H1 (cell line): ENCODE measurements at regions of chr7 and their contacts with region 1.

Region 1: DNA sequence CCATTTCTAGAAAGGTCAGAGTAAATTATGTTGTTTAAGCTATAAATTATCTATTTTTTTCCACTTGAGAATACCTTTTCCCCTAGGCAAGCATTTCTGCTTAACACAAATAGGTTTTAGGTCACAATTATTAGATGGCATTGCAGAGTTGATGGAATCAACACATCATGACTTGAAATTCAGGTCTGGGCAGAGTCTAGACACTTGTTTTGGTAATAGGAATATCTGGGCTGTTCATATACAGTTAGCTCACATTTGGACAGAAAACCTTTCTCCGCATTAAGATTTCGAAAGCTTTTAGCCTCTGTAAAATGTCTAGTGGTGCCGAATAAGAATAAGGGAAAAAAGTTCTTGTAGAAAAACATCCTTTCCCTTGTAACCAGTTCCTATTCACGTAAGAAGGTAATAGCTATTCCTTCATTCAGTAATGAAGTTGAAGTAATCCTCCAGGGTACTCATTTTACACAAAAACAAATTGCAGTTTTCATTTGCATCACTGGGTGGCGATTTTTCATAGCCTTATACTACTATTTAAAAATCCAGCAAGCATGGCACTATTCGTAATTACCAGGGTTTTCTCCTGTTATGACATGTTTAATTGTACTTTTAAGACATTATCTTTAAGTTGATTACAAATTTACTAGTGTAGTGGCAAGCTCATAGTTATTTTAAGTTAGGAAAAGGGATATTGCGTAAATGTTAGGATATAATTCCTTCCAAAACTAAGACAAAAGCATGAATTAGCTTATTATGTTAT is 37.0 kb downstream of the RPA3 start:
- DNase-seq: no peak
- H3K4me3 ChIP-seq: no peak overlapping the region
- H3K27ac ChIP-seq: no peak overlapping the region
- H3K4me1 ChIP-seq: no peaks in the 10 kb centered on the region
- H3K27me3 ChIP-seq: no peaks in the 10 kb centered on the region
- CTCF ChIP-seq: peak in 1 of 3 experiments; percentile 33; a peak in 2 of 4 replicates
- EP300 ChIP-seq: no peak
- POLR2A ChIP-seq: no peak
- RAD21 ChIP-seq: peak; percentile 56 to 63

Region 2: DNA sequence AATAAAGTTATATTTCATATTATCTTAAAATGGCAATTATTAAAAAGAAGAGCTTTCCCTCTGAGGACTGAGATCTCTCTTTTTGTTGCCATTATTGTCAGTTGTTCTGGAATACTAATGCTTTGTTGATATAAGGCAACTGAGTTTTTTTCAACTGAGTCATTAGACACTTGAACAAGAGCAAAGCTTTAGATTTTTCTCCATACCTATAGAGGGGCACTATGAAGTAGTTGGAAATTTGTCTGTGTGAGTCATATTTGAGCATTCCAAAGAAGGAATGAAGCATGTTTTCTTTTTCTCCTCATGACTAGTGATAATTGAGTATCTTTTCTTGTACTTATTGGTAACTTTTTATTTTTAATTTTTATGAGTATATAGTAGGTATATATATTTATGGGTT is 12.5 kb after region 1 on chr7:
- CTCF ChIA-PET with region 1: interaction called, 19 read pairs
- POLR2A ChIA-PET with region 1: no interaction called
- DNase-seq: no peak
- H3K4me3 ChIP-seq: no peak overlapping the region
- H3K27ac ChIP-seq: no peak overlapping the region
- H3K4me1 ChIP-seq: peaks cover 0 to 3% (median 0%) of the 10 kb centered on the region in 4 experiments; a peak in 1 of 7 replicates
- H3K27me3 ChIP-seq: no peaks in the 10 kb centered on the region
- CTCF ChIP-seq: no peak
- EP300 ChIP-seq: no peak
- POLR2A ChIP-seq: no peak
- RAD21 ChIP-seq: no peak

Region 3: GRCh38 chr7:7819442-7820247 is 138.3 kb after region 1 on chr7:
- CTCF ChIA-PET with region 1: no interaction called
- POLR2A ChIA-PET with region 1: no interaction called
- DNase-seq: no peak
- H3K4me3 ChIP-seq: no peak overlapping the region
- H3K27ac ChIP-seq: no peak overlapping the region
- H3K4me1 ChIP-seq: peaks cover 0 to 8% (median 4%) of the 10 kb centered on the region in 4 experiments; a peak in 3 of 7 replicates
- H3K27me3 ChIP-seq: no peaks in the 10 kb centered on the region
- CTCF ChIP-seq: no peak
- EP300 ChIP-seq: no peak
- POLR2A ChIP-seq: no peak
- RAD21 ChIP-seq: no peak